ENCODE measurements at regions of chr1 and their contacts with region 1.

Region 1: GRCh38 chr1:8671306-8671917 is 146.0 kb downstream of the RERE start:
- DNase-seq: no peak

Region 2: DNA sequence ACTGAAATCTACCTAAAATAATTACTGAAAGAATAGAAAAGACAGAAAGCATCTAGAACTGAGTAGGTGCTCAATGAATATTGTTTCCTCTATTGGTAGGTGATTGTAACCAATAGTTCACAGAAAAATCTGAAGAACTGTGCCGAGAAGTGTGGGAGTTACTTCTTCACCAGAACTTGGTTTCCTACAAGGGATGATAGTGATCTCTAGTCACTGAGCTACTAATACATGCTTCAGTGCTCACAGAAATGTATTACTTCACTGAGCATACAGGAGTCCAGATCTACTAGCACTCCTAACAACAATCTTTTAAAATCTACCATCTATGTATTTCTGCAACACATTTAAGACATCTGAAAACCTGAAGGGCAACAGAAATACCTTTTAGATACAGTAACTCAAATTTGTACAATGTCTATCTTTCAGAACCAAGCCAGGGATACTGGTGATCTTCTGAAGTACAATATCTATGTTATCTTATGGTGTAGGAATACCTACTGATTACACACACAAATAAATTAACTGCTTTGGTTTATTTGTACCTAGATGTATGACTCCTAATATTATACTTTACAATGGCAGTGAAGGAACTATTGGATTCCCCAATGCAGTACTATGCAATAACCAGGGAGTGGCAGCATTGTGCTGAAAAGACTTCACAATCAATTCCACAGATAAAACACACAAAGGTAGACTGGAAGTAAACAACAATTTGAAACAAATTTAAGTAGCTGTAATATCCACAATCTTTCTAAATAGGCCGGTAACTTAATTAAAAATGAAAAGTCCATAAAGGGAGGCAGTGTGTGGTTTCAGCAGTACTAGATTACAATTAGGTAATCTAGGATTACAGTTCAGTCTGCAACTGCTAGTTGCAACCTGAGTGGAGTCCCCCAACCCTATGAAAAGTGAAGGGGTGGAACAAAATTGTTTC is 110.5 kb before region 1 on chr1:
- intact Hi-C with region 1: loop called (anchors 5 to 10 kb)
- DNase-seq: no peak

Region 3: DNA sequence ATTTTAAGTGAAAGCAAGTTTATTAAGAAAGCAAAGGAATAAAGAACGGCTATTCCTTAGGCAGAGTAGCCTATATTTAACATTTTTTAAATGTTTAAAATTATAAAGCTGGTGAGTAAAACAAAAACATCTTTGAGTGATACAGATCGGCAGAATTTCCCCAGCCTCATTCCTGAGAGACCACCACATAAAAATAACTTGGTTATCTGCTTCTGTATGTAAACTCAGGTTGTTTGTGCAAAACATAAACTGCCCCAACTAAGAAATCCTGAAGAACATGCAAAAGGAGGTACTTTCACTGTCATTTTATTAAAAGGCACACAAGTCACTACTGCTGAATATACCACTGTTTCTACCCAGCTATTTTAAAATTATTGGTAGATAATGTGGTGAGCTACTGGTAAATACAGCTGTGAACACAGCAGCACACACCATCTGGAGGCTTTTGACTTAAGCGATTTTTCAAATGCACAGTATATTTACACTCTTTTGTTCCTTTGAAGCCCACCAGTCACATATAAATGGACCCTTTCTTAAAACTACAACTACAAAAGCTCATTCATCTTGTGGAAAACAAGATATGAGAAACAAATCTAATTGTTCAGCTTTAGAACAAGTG is 26.7 kb after region 1 on chr1:
- intact Hi-C with region 1: no loop called
- DNase-seq: no peak

Region 4: DNA sequence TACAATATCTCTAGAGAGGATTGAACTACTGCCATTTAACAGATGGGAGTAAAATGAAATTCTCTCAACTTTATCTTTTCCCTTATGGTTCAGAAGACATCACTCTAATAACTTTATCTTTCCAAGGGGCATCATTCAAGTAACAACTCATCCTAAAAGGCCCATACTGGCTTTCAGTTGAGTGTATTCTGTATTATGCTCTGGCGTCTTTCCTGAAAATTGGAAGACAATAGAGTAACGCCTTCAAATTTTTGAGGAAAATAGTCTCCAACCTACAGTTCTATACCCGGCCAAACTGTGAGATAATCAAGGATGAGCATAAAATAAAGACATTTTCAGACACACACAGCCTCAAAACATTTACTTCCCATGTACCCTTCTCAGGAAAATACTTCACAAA is 42.8 kb after region 1 on chr1:
- intact Hi-C with region 1: loop called in 1 of 2 experiments (anchors 1 kb)
- DNase-seq: no peak

Measured in posterior vena cava (tissue), 2 donors.